GM12878 (cell line): ENCODE measurements at regions of chr4 and their contacts with region 1.

Region 1: GRCh38 chr4:105631818-105632400 is 76.6 kb downstream of the INTS12 start:
- DNase-seq: no peak
- ATAC-seq: peak; percentile 20; the same call in 2 of the 3 replicates
- H3K4me3 ChIP-seq: no peak overlapping the region
- H3K27ac ChIP-seq: no peak overlapping the region
- H3K4me1 ChIP-seq: peaks cover 15% of the 10 kb centered on the region
- H3K27me3 ChIP-seq: no peaks in the 10 kb centered on the region
- CTCF ChIP-seq: no peak
- EP300 ChIP-seq: no peak
- POLR2A ChIP-seq: no peak
- RAD21 ChIP-seq: no peak

Region 2: GRCh38 chr4:105058177-105058812 is 573.6 kb before region 1 on chr4:
- CTCF ChIA-PET with region 1: no interaction called
- POLR2A ChIA-PET with region 1: no interaction called
- RAD21 ChIA-PET with region 1: no interaction called
- SMC1A ChIA-PET with region 1: no interaction called
- in situ Hi-C with region 1: no loop called
- intact Hi-C with region 1: no loop called
- DNase-seq: peak; percentile 58
- ATAC-seq: peak; percentile 5; the same call in 1 of the 3 replicates
- H3K4me3 ChIP-seq: no peak overlapping the region
- H3K27ac ChIP-seq: peak overlapping the region; percentile 90
- H3K4me1 ChIP-seq: peaks cover 48% of the 10 kb centered on the region
- H3K27me3 ChIP-seq: no peaks in the 10 kb centered on the region
- CTCF ChIP-seq: no peak
- EP300 ChIP-seq: 0 out of 4 replicates have a peak, but pooled peaks of 1 of the 2 experiments have one; percentile 39
- POLR2A ChIP-seq: no peak
- RAD21 ChIP-seq: no peak

Region 3: DNA sequence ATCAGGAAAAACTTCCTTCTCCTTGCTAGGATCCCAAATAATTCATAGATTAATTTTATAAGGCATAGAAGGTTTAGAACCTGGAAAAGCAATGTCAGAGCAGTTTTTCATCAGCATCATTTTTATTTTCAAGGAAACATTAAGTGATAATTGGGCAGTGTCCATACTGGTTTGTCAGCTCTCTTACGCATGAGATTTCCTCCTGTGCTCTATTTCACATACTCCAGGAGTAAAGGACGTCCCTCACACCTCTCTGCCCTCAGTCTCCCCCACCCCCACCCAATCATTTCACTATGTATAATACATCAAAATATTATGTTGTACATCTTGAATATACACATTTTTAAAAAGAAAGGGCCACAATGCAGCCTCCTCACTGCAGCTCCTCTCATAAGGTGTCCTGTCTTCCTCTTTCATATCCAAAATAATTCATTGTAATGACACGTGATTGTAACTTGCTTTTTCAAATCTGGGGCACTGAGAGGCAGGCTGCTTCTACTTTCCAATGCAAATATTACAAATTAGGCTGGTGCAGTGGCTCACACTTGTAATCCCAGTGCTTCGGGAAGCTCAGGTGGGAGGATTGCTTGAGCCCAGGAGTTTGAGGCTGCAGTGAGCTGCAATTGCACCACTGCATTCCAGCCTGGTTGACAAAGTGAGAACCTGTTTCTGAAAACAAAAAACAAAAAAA is 45.1 kb before region 1 on chr4:
- CTCF ChIA-PET with region 1: interaction called, 3 read pairs
- POLR2A ChIA-PET with region 1: interaction called, 4 read pairs
- RAD21 ChIA-PET with region 1: interaction called, 12 read pairs
- SMC1A ChIA-PET with region 1: interaction called, 7 read pairs
- in situ Hi-C with region 1: no loop called
- intact Hi-C with region 1: loop called (anchors 5 kb)
- DNase-seq: no peak
- ATAC-seq: peak; percentile 61
- H3K4me3 ChIP-seq: no peak overlapping the region
- H3K27ac ChIP-seq: no peak overlapping the region
- H3K4me1 ChIP-seq: peaks cover 10% of the 10 kb centered on the region; the same call in 1 of the 2 replicates
- H3K27me3 ChIP-seq: no peaks in the 10 kb centered on the region
- CTCF ChIP-seq: no peak; a peak in 1 of 6 replicates
- EP300 ChIP-seq: no peak
- POLR2A ChIP-seq: no peak
- RAD21 ChIP-seq: 0 out of 2 replicates have a peak, but pooled peaks have one; percentile 9

Region 4: DNA sequence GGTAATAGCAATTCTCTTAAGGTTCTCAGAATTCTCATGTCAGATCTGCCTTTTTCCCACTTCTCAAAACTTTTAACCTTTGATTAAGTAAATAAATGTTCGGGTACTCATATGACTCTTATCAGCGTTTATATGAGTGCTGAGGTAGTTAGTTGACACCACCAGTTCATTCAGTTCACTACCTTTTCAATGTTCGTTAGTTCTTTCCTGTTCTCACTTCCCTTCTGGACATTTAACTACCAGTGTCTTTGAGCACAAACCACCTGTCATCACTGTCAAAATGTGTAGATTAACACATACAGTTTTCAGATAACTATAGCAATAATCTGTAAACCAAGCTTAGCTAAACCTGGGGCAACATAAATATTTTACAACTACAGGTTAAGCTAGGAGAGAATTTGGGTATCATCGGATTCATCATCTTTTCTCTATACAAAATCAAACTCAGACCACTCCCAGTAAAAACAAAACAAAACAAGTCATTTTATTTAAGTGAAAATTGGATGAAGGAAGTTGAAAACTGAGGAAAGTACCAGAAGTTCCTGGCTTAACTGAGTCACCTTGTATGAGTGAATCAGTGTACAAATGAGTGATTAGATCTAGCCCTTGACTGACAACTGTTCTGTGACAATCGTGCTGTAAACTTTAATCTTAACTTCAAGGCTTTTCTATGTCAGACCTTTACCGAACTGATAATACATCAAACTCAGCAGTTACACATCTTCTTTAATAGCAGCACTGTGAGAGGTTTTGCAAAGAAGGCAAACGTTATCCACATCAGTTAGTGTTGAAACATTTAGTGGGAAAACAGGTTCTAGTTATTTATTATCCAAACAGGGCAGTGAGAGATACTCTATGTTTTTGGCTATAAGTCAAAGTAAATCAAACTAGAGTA is 37.6 kb before region 1 on chr4:
- CTCF ChIA-PET with region 1: interaction called, 5 read pairs
- POLR2A ChIA-PET with region 1: interaction called, 3 read pairs
- RAD21 ChIA-PET with region 1: interaction called, 5 read pairs
- SMC1A ChIA-PET with region 1: interaction called, 33 read pairs
- in situ Hi-C with region 1: no loop called
- intact Hi-C with region 1: loop called (anchors 5 kb)
- DNase-seq: peak; percentile 59
- ATAC-seq: peak; percentile 95
- H3K4me3 ChIP-seq: peak overlapping the region; percentile 47
- H3K27ac ChIP-seq: peak overlapping the region; percentile 77
- H3K4me1 ChIP-seq: no peaks in the 10 kb centered on the region; the same call in 1 of the 2 replicates
- H3K27me3 ChIP-seq: no peaks in the 10 kb centered on the region
- CTCF ChIP-seq: no peak
- EP300 ChIP-seq: peak; percentile 85 to 92
- POLR2A ChIP-seq: no peak
- RAD21 ChIP-seq: no peak

Region 5: GRCh38 chr4:105599932-105600655 is 31.8 kb before region 1 on chr4:
- CTCF ChIA-PET with region 1: interaction called, 5 read pairs
- POLR2A ChIA-PET with region 1: interaction called, 3 read pairs
- RAD21 ChIA-PET with region 1: interaction called, 9 read pairs
- SMC1A ChIA-PET with region 1: interaction called, 33 read pairs
- in situ Hi-C with region 1: no loop called
- intact Hi-C with region 1: no loop called
- DNase-seq: no peak
- ATAC-seq: no peak
- H3K4me3 ChIP-seq: no peak overlapping the region
- H3K27ac ChIP-seq: no peak overlapping the region
- H3K4me1 ChIP-seq: no peaks in the 10 kb centered on the region
- H3K27me3 ChIP-seq: no peaks in the 10 kb centered on the region
- CTCF ChIP-seq: no peak
- EP300 ChIP-seq: no peak
- POLR2A ChIP-seq: no peak
- RAD21 ChIP-seq: no peak

Region 6: GRCh38 chr4:105605493-105605892 is 26.4 kb before region 1 on chr4:
- CTCF ChIA-PET with region 1: no interaction called
- POLR2A ChIA-PET with region 1: interaction called, 7 read pairs
- RAD21 ChIA-PET with region 1: interaction called, 9 read pairs
- SMC1A ChIA-PET with region 1: interaction called, 16 read pairs
- in situ Hi-C with region 1: no loop called
- intact Hi-C with region 1: no loop called
- DNase-seq: no peak
- ATAC-seq: peak; percentile 71
- H3K4me3 ChIP-seq: no peak overlapping the region
- H3K27ac ChIP-seq: no peak overlapping the region
- H3K4me1 ChIP-seq: no peaks in the 10 kb centered on the region
- H3K27me3 ChIP-seq: no peaks in the 10 kb centered on the region
- CTCF ChIP-seq: no peak
- EP300 ChIP-seq: 0 out of 4 replicates have a peak, but pooled peaks of 1 of the 2 experiments have one; percentile 58
- POLR2A ChIP-seq: no peak
- RAD21 ChIP-seq: no peak

Region 7: DNA sequence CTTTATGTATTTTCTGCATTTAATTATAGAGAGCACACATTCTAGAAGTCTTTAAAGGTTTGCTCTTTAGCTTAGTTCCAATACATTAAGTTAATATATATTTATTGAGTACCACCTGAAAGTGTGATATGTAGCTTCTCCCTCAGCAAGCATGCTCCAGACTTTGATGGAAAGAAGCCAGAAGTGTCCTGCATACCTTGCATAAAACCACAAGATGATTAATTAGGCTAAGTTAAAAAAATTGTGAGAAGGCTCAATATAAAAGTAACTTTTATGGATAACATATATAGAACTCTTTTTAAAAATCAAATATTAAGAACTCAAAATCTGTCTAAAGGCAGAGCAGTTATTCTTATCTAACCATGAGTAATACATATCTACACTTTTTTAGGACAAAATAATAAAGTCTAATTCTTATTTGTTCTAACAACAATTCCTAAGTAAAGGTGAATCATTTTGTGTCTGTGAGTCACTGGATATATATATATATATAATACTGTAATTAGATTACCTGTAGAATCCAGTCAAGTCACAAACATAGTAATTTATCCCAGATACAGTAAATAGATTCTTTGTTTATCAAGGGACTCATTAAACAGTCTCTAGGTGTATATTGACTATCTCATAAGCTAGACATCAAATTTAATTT is 25.3 kb after region 1 on chr4:
- CTCF ChIA-PET with region 1: interaction called, 6 read pairs
- POLR2A ChIA-PET with region 1: interaction called, 4 read pairs
- RAD21 ChIA-PET with region 1: interaction called, 22 read pairs
- SMC1A ChIA-PET with region 1: interaction called, 130 read pairs
- in situ Hi-C with region 1: no loop called
- intact Hi-C with region 1: no loop called
- DNase-seq: no peak
- ATAC-seq: no peak
- H3K4me3 ChIP-seq: no peak overlapping the region
- H3K27ac ChIP-seq: no peak overlapping the region
- H3K4me1 ChIP-seq: no peaks in the 10 kb centered on the region
- H3K27me3 ChIP-seq: no peaks in the 10 kb centered on the region
- CTCF ChIP-seq: no peak
- EP300 ChIP-seq: no peak
- POLR2A ChIP-seq: no peak
- RAD21 ChIP-seq: no peak

Region 8: DNA sequence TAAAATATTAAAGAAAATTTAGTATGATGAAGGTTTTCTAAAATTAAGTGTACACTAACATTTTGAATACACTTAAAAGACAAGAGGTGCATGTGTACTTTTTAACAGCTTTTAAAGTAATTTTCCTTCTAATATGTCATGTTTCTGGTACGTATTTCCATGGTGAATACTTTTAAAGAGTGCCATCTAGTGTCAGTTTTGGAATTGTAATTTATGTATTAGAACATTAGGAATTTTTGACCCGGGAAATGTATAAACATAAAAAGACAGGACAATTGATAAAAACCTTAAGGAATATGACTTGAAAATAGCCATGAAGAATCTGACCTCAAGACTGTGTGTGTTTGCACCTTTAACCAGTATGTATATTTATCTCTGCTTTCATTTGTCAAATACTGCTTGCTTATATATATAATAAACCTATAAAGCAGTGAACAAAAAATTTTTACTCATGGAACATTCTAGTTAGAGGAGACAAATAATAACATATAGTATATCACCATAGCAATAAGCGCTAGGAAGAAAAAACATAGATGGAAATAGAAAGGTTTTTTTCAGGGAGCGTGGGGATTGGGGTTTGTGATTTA is 83.9 kb after region 1 on chr4:
- CTCF ChIA-PET with region 1: interaction called, 6 read pairs
- POLR2A ChIA-PET with region 1: no interaction called
- RAD21 ChIA-PET with region 1: interaction called, 21 read pairs
- SMC1A ChIA-PET with region 1: interaction called, 9 read pairs
- in situ Hi-C with region 1: no loop called
- intact Hi-C with region 1: no loop called
- DNase-seq: no peak
- ATAC-seq: 0 out of 3 replicates have a peak, but pooled peaks have one; percentile 10
- H3K4me3 ChIP-seq: no peak overlapping the region
- H3K27ac ChIP-seq: no peak overlapping the region
- H3K4me1 ChIP-seq: peaks cover 3% of the 10 kb centered on the region; the same call in 1 of the 2 replicates
- H3K27me3 ChIP-seq: no peaks in the 10 kb centered on the region
- CTCF ChIP-seq: peak; percentile 17 to 48 (median 36); a peak in 2 of 6 replicates
- EP300 ChIP-seq: no peak
- POLR2A ChIP-seq: no peak
- RAD21 ChIP-seq: peak; percentile 49

Region 9: GRCh38 chr4:105815701-105816100 is 183.8 kb after region 1 on chr4:
- CTCF ChIA-PET with region 1: no interaction called
- POLR2A ChIA-PET with region 1: no interaction called
- RAD21 ChIA-PET with region 1: no interaction called
- SMC1A ChIA-PET with region 1: no interaction called
- in situ Hi-C with region 1: no loop called
- intact Hi-C with region 1: no loop called
- DNase-seq: no peak
- ATAC-seq: no peak
- H3K4me3 ChIP-seq: no peak overlapping the region
- H3K27ac ChIP-seq: no peak overlapping the region
- H3K4me1 ChIP-seq: no peaks in the 10 kb centered on the region
- H3K27me3 ChIP-seq: no peaks in the 10 kb centered on the region
- CTCF ChIP-seq: no peak
- EP300 ChIP-seq: no peak
- POLR2A ChIP-seq: no peak
- RAD21 ChIP-seq: no peak